ENCODE measurements at regions of chr9 and their contacts with region 1.

Region 1: GRCh38 chr9:87678650-87679515 is 47.0 kb upstream of the CTSL start:
- DNase-seq: peak in 1 of 3 donors; percentile 67
- ATAC-seq: peak; percentile 64
- H3K4me3 ChIP-seq: no peak overlapping the region
- H3K4me1 ChIP-seq: no peaks in the 10 kb centered on the region
- CTCF ChIP-seq: peak; percentile 60

Region 2: DNA sequence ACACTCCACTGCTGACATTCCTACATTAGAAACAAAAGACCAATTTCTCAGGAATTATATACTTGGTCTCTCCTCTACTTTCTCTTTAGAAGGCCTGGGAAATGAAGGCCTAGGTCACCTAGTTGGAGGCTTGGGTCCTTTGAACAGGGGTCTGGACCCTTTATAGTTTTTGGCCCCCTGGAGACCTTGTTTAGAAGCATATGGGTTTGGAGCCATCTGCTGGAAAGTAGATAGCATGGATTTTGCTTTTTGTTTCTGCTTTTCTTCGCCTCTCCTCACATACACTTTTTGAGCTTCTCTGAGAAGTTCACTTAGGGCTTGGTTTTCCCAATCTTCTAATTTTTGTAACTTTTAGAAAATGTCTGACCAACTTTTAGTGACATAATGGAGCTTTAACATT is 362.6 kb after region 1 on chr9:
- intact Hi-C with region 1: loop called in 1 of 2 experiments (anchors 10 kb)
- DNase-seq: no peak
- ATAC-seq: no peak
- H3K4me3 ChIP-seq: no peak overlapping the region
- H3K4me1 ChIP-seq: no peaks in the 10 kb centered on the region
- CTCF ChIP-seq: peak; percentile 16

Measured in mucosa of descending colon (tissue), 3 donors.